Activated CD8-positive, alpha-beta T cell treated with anti-CD3 and anti-CD28 coated beads for 36 hours (primary cell): ENCODE measurements at regions of chr17 and their contacts with region 1.

Region 1: DNA sequence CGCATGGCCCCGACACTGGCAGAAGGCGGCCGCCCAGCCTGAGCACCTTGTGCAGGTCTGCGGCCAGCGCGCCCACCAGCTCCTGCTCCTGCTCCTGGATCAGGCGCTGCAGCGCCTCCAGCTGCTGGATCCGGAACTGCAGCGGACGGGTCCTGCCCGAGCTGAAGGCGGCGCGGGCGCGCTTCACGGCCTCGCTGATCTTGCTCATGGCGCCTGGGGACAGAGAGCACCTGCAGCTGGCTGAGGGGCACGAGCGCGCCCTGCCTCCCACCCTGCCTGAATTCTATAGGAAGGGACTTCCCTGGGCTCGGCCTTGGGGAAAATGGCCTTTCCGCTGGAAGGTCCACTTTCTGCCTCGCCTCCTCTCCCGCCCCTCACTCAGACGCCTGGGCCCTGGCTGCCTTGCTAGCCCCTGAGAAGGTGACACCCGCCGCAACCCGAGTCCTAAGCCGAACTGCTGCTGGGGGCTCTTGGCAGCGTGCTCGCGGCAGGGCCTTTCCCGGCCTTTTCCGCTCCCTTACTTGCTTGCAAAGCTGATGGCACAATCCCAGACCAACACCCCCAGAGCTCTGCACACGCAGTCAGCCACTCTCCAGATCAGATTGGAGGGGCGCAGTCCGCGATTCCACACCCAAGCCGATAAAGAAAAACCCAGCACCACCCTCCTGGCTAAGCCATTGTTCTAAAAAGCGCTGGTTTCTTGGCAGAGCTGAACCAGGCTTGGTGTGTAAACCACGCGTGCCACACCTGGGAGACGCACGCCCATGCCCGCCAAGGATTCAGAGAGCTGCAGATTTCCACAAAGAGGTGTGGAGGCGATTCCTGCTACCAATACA is 3.0 kb downstream of the ALDH3A1 start:
- DNase-seq: peak; percentile 95
- ATAC-seq: peak; percentile 99
- H3K4me3 Mint-ChIP-seq: peak overlapping the region; percentile 70
- H3K27ac Mint-ChIP-seq: no peak overlapping the region
- H3K4me1 Mint-ChIP-seq: peaks cover 2% of the 10 kb centered on the region
- H3K27me3 Mint-ChIP-seq: no peaks in the 10 kb centered on the region
- CTCF ChIP-seq: peak; percentile 90

Region 2: DNA sequence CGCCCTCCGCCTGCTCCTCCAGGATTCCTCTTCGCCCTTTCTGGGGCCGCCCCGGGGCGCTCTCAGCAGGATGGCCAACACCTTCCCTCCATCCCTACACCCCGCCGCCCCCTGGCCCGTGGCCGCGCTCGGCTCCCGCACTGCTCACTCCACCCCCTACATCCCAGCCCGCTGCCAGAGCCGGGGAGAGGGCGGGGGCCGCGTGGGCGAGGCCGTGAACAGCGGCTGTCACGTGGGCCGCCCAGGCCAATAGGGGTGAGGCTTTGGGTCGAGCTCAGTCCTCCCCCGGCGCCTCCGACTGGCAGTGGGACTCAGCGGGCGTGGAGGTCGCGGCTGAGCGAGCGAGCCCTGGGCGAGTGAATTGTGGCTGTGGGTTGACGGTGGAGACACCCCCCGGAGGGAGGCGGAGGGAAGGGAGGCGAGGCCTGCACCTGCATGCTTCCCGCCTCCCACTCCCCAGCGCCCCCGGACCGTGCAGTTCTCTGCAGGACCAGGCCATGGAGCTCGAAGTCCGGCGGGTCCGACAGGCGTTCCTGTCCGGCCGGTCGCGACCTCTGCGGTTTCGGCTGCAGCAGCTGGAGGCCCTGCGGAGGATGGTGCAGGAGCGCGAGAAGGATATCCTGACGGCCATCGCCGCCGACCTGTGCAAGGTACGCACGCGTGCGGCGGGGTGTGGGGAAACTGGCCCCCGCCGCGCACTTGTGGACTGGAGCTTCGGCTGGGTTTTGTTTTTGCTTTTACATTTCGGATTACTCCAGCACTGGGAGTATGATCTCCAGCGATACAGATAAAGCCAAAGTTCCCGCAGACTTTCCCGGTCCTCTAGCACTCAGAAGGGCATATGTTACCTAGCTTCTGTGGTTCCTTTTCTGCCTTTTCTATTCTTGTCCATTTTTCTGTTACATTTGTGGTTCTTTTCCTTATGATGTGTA is 96.4 kb before region 1 on chr17 and contains the start of gene ALDH3A2:
- CTCF ChIA-PET with region 1: interaction called, 18 read pairs
- POLR2A ChIA-PET with region 1: no interaction called
- intact Hi-C with region 1: no loop called
- DNase-seq: peak; percentile 98
- ATAC-seq: peak; percentile 94
- H3K4me3 Mint-ChIP-seq: peak within 1 kb of the TSS; percentile 88
- H3K27ac Mint-ChIP-seq: peak within 1 kb of the TSS; percentile 89
- H3K4me1 Mint-ChIP-seq: peaks cover 40% of the 10 kb centered on the region
- H3K27me3 Mint-ChIP-seq: no peaks in the 10 kb centered on the region
- CTCF ChIP-seq: no peak
- total RNA-seq, gene ALDH3A2: 17.6 to 20.3 TPM

Region 3: GRCh38 chr17:19730843-19731242 is 14.3 kb before region 1 on chr17:
- CTCF ChIA-PET with region 1: interaction called, 18 read pairs
- POLR2A ChIA-PET with region 1: interaction called, 3 read pairs
- intact Hi-C with region 1: no loop called
- DNase-seq: no peak
- ATAC-seq: no peak
- H3K4me3 Mint-ChIP-seq: no peak overlapping the region
- H3K27ac Mint-ChIP-seq: no peak overlapping the region
- H3K4me1 Mint-ChIP-seq: no peaks in the 10 kb centered on the region
- H3K27me3 Mint-ChIP-seq: no peaks in the 10 kb centered on the region
- CTCF ChIP-seq: no peak